ENCODE measurements at regions of chr17 and their contacts with region 1.

Region 1: GRCh38 chr17:35119368-35120165 is at the start of gene RAD51D:
- DNase-seq: peak; percentile 60
- ATAC-seq: peak; percentile 88
- H3K4me3 ChIP-seq: peak within 1 kb of the TSS; percentile 80 to 94 (median 86)
- H3K27ac ChIP-seq: peak within 1 kb of the TSS; percentile 63
- H3K4me1 ChIP-seq: peaks cover 29% of the 10 kb centered on the region
- H3K27me3 ChIP-seq: no peaks in the 10 kb centered on the region; a peak in 1 of 5 replicates
- CTCF ChIP-seq: peak; percentile 89
- EP300 ChIP-seq: no peak
- POLR2A ChIP-seq: peak in 1 of 2 experiments; percentile 61; a peak in 3 of 4 replicates
- RAD21 ChIP-seq: peak; percentile 99
- total RNA-seq, gene RAD51D: 12.9 and 13.1 TPM in 2 replicates

Region 2: DNA sequence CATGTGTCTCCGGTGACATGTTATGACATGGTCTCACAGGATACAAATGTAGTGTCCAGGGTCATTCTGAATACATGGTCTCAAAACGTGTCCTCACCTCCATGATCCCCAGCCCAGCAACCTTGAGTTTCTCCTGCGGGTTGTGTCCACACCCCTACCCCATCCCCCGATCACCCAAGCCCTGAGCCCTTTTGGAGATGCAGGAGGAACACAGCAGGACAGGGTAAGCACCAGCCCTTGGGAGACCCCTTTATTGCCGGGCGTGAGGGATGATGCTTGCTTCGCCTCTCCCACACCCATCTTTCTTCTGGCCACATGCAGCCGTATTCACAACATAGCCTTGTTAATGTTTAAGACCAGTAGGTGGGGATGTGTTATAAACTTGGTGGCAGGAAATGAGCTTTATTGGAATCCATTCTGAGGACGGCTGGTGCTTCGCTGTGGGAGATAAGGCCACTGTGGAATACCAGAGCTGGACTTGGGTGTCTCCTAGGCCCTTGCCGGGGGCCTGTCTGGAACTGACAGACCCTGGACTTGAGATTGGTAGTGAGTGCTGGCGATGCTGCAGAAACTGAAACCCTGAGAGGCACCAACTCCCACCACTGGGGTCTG is 534.7 kb before region 1 on chr17:
- CTCF ChIA-PET with region 1: no interaction called
- POLR2A ChIA-PET with region 1: no interaction called
- in situ Hi-C with region 1: loop called (anchors 25 kb)
- intact Hi-C with region 1: no loop called
- DNase-seq: no peak
- ATAC-seq: peak; percentile 48; the same call in 1 of the 3 replicates
- H3K4me3 ChIP-seq: no peak overlapping the region
- H3K27ac ChIP-seq: no peak overlapping the region
- H3K4me1 ChIP-seq: no peaks in the 10 kb centered on the region
- H3K27me3 ChIP-seq: peaks cover 4 to 46% of the 10 kb centered on the region in 2 experiments
- CTCF ChIP-seq: peak; percentile 44
- EP300 ChIP-seq: no peak
- POLR2A ChIP-seq: no peak
- RAD21 ChIP-seq: no peak

Region 3: DNA sequence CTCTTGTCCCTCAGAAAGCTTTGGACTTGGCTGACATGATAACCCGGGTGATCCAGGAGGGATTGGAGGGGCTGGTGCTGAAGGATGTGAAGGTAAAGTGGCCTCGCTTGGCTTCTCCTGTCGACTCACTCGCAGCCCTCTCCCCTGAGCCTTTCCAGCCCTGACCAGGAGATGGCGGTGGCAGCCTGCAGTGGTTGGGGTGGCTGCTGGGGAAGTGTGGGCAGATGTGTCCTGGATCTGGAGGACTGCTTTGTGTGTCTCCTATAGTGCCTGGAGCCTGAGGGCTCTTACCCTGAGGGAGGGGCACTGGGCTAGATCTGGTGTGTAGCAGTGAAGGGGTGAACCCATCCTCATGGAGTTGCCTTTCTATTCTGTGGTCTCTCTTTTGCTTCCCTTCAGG is 121.4 kb before region 1 on chr17:
- CTCF ChIA-PET with region 1: interaction called, 46 read pairs
- POLR2A ChIA-PET with region 1: interaction called, 4 read pairs
- in situ Hi-C with region 1: loop called (anchors 5 kb)
- intact Hi-C with region 1: loop called (anchors 1 kb)
- DNase-seq: peak; percentile 56
- ATAC-seq: peak; percentile 87
- H3K4me3 ChIP-seq: no peak overlapping the region
- H3K27ac ChIP-seq: no peak overlapping the region
- H3K4me1 ChIP-seq: no peaks in the 10 kb centered on the region
- H3K27me3 ChIP-seq: no peaks in the 10 kb centered on the region
- CTCF ChIP-seq: peak; percentile 97
- EP300 ChIP-seq: no peak
- POLR2A ChIP-seq: no peak
- RAD21 ChIP-seq: peak; percentile 90

Region 4: GRCh38 chr17:35129973-35130351 is 10.4 kb after region 1 on chr17:
- CTCF ChIA-PET with region 1: no interaction called
- POLR2A ChIA-PET with region 1: no interaction called
- in situ Hi-C with region 1: no loop called
- intact Hi-C with region 1: no loop called
- DNase-seq: no peak
- ATAC-seq: no peak
- H3K4me3 ChIP-seq: no peak overlapping the region
- H3K27ac ChIP-seq: no peak overlapping the region
- H3K4me1 ChIP-seq: no peaks in the 10 kb centered on the region
- H3K27me3 ChIP-seq: no peaks in the 10 kb centered on the region
- CTCF ChIP-seq: no peak
- EP300 ChIP-seq: no peak
- POLR2A ChIP-seq: no peak
- RAD21 ChIP-seq: no peak